ENCODE measurements at regions of chr1 and their contacts with region 1.

Region 1: GRCh38 chr1:40563266-40563665 is 31.8 kb downstream of the ZNF684 start:
- DNase-seq: no peak
- ATAC-seq: no peak
- H3K4me3 ChIP-seq: no peak overlapping the region
- H3K27ac ChIP-seq: no peak overlapping the region
- H3K4me1 ChIP-seq: no peaks in the 10 kb centered on the region
- H3K27me3 ChIP-seq: no peaks in the 10 kb centered on the region
- CTCF ChIP-seq: no peak

Region 2: DNA sequence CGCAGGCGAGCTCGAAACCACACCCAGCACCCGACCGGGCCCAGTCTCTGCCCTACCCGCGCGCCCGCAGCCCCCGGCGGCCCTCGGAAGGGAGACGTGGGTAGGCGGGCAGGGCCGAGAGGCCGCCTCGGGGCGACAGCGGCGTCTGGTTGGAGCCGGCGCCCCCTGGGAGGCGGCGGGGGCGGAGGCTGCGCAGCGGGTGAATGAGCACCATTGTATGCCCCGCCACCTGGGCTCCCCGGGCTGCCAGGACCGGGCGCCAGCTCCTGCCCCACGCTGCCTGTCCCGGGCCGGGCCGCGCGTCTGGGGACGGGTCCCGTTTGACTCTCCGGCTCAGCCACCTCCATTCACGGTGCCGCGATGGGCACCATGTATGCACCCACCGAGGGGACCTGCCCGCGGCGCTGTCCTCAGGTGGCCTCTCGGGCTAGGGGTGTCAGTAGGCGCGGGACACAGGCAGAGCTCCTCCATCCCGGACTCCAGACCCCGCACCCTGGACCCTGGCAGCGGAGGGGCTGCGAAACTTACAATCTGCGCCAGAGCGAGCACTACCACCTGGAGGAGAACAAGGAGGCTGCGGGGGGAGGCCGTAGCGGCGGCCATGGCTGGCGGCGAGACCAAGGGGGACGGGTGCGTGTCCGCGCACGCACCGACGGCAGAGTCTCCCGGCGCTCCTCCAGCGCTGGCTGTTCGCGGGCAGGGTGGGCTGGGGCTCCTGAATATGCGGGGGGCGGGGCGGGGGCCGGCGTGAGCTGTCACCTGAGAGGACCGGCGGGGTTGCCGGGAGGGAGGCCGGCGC is 246.5 kb before region 1 on chr1 and contains the start of gene COL9A2:
- CTCF ChIA-PET with region 1: no interaction called
- POLR2A ChIA-PET with region 1: no interaction called
- intact Hi-C with region 1: no loop called
- DNase-seq: peak; percentile 45
- ATAC-seq: peak; percentile 67
- H3K4me3 ChIP-seq: peak within 1 kb of the TSS; percentile 87
- H3K27ac ChIP-seq: no peak within 1 kb of the TSS
- H3K4me1 ChIP-seq: no peaks in the 10 kb centered on the region
- H3K27me3 ChIP-seq: no peaks in the 10 kb centered on the region
- CTCF ChIP-seq: no peak
- total RNA-seq, gene COL9A2: 4.4 and 7.0 TPM in 2 replicates

Region 3: GRCh38 chr1:40606978-40607377 is 43.7 kb after region 1 on chr1:
- CTCF ChIA-PET with region 1: interaction called, 10 read pairs
- POLR2A ChIA-PET with region 1: no interaction called
- intact Hi-C with region 1: no loop called
- DNase-seq: no peak
- ATAC-seq: no peak
- H3K4me3 ChIP-seq: no peak overlapping the region
- H3K27ac ChIP-seq: no peak overlapping the region
- H3K4me1 ChIP-seq: no peaks in the 10 kb centered on the region
- H3K27me3 ChIP-seq: no peaks in the 10 kb centered on the region
- CTCF ChIP-seq: no peak

Measured in PC-3 (cell line).